B cell (primary cell): ENCODE measurements at regions of chr19 and their contacts with region 1.

Region 1: GRCh38 chr19:48835734-48836088 is 580 bp downstream of the HSD17B14 start:
- DNase-seq: peak; percentile 96
- ATAC-seq: peak; percentile 87
- H3K4me3 ChIP-seq: peak overlapping the region in 4 of 5 experiments; percentile 25 to 59 (median 54)
- H3K4me3 Mint-ChIP-seq: peak overlapping the region; percentile 98
- H3K27ac ChIP-seq: peak overlapping the region in 1 of 2 donors; percentile 56
- H3K27ac Mint-ChIP-seq: peak overlapping the region; percentile 93
- H3K4me1 ChIP-seq: peaks cover 16 to 25% of the 10 kb centered on the region in 2 donors
- H3K4me1 Mint-ChIP-seq: peaks cover 25% of the 10 kb centered on the region
- H3K27me3 ChIP-seq: peaks cover 0 to 13% (median 1%) of the 10 kb centered on the region in 4 experiments
- H3K27me3 Mint-ChIP-seq: no peaks in the 10 kb centered on the region
- CTCF ChIP-seq: peak; percentile 82

Region 2: GRCh38 chr19:48812094-48812929 is 23.4 kb before region 1 on chr19:
- CTCF ChIA-PET with region 1: interaction called, 3 read pairs
- POLR2A ChIA-PET with region 1: interaction called, 3 read pairs
- intact Hi-C with region 1: loop called (anchors 1 kb)
- DNase-seq: peak; percentile 81
- ATAC-seq: peak; percentile 83
- H3K4me3 ChIP-seq: peak overlapping the region in 4 of 5 experiments; percentile 62 to 88 (median 74)
- H3K4me3 Mint-ChIP-seq: peak overlapping the region; percentile 93
- H3K27ac ChIP-seq: peak overlapping the region; percentile 16 to 22
- H3K27ac Mint-ChIP-seq: peak overlapping the region; percentile 97
- H3K4me1 ChIP-seq: peaks cover 7 to 26% of the 10 kb centered on the region in 2 donors
- H3K4me1 Mint-ChIP-seq: peaks cover 34% of the 10 kb centered on the region
- H3K27me3 ChIP-seq: no peaks in the 10 kb centered on the region
- H3K27me3 Mint-ChIP-seq: no peaks in the 10 kb centered on the region
- CTCF ChIP-seq: no peak